Naive thymus-derived CD8-positive, alpha-beta T cell (primary cell): ENCODE measurements at regions of chr6 and their contacts with region 1.

Region 1: DNA sequence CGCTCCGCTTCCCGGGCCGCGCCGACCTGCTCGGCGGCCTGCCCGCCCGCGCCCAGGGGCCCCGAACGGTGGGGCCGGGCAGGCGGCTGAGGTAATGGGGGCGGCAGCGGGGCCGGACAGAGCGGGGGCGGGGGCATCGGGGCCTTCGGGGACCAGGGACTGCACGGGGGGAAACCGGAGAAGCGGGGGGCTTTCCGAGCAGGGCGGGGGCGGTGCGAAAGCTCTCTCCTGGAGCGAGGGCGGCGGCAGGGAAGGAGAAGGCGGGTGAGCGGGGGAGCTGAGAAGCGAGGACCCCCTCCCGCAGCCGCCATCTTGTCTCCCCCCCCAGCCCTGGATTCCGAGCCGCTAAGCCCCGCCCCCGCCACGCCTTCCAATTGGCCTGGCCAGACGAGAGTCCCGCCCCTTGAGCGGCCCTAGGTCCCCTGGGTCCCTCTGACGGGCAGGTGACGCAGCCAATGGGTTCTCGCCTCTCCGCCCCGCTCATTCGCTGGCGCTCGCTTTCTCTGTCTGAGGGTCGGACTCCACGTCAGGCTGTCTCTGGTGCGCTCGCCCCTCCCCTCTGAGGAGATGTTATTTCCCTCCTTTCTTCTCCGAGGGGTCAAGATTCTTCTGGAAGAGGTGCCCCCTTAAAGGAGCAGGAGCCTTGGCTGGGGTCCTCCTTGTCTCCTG is 470 bp downstream of the BRPF3 start:
- DNase-seq: peak; percentile 98 to 100 (median 99)
- ATAC-seq: peak; percentile 86 to 88
- H3K4me3 Mint-ChIP-seq: peak overlapping the region; percentile 87 to 96 (median 91)
- H3K27ac Mint-ChIP-seq: peak overlapping the region; percentile 89 to 97 (median 94)
- H3K4me1 Mint-ChIP-seq: peaks cover 23 to 57% (median 52%) of the 10 kb centered on the region in 4 donors
- H3K27me3 Mint-ChIP-seq: no peaks in the 10 kb centered on the region

Region 2: GRCh38 chr6:36207155-36207554 is 10.1 kb after region 1 on chr6:
- POLR2A ChIA-PET with region 1: interaction called, 10 read pairs
- DNase-seq: no peak
- ATAC-seq: no peak
- H3K4me3 Mint-ChIP-seq: no peak overlapping the region
- H3K27ac Mint-ChIP-seq: no peak overlapping the region
- H3K4me1 Mint-ChIP-seq: peaks cover 31 to 48% (median 45%) of the 10 kb centered on the region in 4 donors
- H3K27me3 Mint-ChIP-seq: no peaks in the 10 kb centered on the region